ENCODE measurements at regions of chr1 and their contacts with region 1.

Region 1: DNA sequence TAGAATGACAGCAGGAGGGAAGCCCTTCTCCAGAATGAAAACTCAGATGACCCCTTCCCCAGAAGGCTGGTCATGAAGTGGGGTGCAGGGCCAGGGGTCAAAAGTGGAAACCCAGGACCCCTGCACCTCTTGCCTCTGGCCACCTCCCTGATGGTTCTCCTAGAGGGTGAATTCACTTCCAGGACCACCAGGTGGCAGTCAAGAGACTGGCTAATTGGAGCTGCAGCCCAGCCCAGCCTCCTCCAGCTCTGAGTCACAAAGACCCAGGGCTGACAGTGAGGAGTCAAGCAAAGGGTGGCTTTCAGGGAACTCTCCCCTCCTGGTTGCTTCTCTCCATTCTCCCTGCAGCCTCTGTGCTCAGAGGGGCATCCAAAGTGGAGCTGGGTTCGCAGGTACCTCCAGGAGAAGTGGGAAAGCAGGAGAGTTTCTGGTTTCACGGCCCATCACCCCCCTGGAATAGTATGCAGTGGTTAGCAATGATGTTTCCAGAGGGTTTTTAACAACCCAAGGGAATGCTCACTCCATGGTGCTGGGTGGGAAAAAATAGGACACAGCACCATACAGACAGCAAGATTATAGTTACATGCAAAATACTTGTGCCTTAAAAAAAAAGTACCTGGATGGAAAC is 6.1 kb upstream of the EPHB2 start:
- DNase-seq: peak; percentile 70 to 96 (median 90)

Region 2: GRCh38 chr1:22861764-22862440 is 157.3 kb after region 1 on chr1:
- intact Hi-C with region 1: loop called (anchors 1 kb)
- DNase-seq: peak in 6 of 10 donors; percentile 44 to 93 (median 58)

Region 3: GRCh38 chr1:22889213-22889827 is 184.8 kb after region 1 on chr1:
- intact Hi-C with region 1: loop called (anchors 1 kb)
- DNase-seq: peak in 3 of 10 donors; percentile 0 to 27 (median 13)